Cardiac septum (tissue), 1 donor: ENCODE measurements at regions of chr14 and their contacts with region 1.

Region 1: GRCh38 chr14:77799863-77800730 is at the start of gene ADCK1:
- DNase-seq: peak; percentile 94
- total RNA-seq, gene ADCK1: 7.2 TPM

Region 2: GRCh38 chr14:77580964-77581505 is 219.1 kb before region 1 on chr14:
- intact Hi-C with region 1: no loop called
- DNase-seq: no peak

Region 3: GRCh38 chr14:77760381-77761246 is 39.5 kb before region 1 on chr14 and contains the start of gene SNW1:
- intact Hi-C with region 1: loop called (anchors 1 kb)
- DNase-seq: peak; percentile 97
- total RNA-seq, gene SNW1: 55.6 TPM

Region 4: DNA sequence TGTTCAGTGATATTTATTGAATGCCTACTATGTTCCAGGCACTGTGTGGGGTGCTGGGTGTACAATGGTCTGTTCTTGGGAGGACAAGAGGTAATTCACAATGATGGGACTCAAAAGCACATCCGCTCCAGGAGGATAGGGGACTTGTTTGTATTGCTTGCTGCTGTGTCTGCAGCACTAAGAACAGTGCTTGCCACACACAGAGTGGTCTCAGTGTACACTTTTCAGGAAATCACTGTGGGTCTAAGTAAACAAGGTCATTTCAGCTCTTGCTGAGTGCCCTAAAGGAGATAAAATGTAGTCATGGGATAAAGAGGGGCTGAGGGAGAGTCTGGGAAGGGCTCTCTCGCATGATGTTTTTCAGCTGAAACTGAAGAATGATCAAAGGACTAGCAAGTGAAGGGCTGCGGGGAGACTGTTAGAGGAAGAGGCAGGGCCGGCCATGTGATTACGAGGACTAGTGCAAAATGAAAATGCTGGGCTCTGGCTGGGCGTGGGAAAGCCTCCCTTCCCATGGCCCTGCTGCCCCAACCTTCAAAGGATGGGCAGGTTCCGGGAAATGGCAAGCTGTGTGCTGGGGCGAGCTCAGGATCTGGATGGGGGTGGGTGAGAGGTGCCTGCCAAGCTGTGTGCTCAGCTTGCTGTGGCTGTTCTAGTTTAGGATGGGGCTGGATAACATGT is 38.9 kb after region 1 on chr14:
- intact Hi-C with region 1: no loop called
- DNase-seq: no peak